ENCODE measurements at regions of chr9 and their contacts with region 1.

Region 1: GRCh38 chr9:34546834-34547827 is 24.3 kb upstream of the ENHO start:
- H3K4me3 ChIP-seq: no peak overlapping the region
- H3K27ac ChIP-seq: no peak overlapping the region
- H3K4me1 ChIP-seq: no peaks in the 10 kb centered on the region
- CTCF ChIP-seq: peak; percentile 38; the same call in 1 of the 2 replicates

Region 2: DNA sequence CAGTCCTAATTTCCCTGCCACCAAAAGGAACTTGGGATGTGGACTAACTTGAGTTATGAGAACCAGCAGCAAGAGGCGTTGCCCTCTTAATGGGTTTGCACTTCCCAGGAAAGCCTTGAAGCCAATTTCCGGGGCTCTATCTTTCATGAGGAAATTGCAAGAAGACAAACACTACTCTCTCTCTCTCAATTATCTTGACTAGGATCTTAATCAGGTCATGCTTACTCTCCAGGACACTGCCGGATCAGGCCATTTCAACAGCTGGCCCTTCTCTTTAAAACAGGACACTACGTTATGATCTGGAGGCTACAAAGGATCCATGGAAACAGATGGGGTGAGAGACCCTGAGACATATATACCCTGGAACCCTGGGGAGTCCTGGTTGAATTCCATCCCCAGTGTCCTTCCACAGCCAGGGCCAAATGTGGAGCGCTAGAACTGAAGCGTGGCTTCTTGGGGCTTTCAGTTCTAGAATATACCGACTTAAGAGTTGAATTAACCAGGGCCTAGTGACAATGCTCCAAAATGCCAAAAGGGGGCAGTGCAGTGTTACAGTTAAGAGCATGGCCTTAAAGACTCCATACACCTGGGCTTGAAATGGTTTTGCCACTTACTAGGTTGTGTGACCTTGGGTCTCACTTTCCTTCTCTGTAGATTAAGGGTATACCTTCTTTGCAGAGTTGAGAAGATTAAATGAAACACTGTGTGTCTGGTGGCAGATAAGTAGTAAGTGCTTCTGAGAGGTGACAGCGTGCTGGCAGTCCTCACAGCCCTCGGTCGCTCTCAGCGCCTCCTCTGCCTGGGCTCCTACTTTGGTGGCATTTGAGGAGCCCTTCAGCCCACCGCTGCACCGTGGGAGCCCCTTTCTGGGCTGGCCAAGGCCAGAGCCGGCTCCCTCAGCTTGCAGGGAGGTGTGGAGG is 109.9 kb before region 1 on chr9:
- CTCF ChIA-PET with region 1: interaction called, 18 read pairs
- POLR2A ChIA-PET with region 1: no interaction called
- H3K4me3 ChIP-seq: no peak overlapping the region
- H3K27ac ChIP-seq: no peak overlapping the region
- H3K4me1 ChIP-seq: no peaks in the 10 kb centered on the region
- CTCF ChIP-seq: 0 out of 2 replicates have a peak, but pooled peaks have one; percentile 14

Region 3: GRCh38 chr9:34522971-34523797 is 23.9 kb before region 1 on chr9 and contains the start of gene ENHO:
- CTCF ChIA-PET with region 1: interaction called, 13 read pairs
- POLR2A ChIA-PET with region 1: interaction called, 3 read pairs
- H3K4me3 ChIP-seq: peak within 1 kb of the TSS; percentile 37
- H3K27ac ChIP-seq: no peak within 1 kb of the TSS
- H3K4me1 ChIP-seq: no peaks in the 10 kb centered on the region
- CTCF ChIP-seq: no peak

Region 4: GRCh38 chr9:34536685-34537084 is 10.4 kb before region 1 on chr9:
- CTCF ChIA-PET with region 1: interaction called, 14 read pairs
- POLR2A ChIA-PET with region 1: no interaction called
- H3K4me3 ChIP-seq: no peak overlapping the region
- H3K27ac ChIP-seq: no peak overlapping the region
- H3K4me1 ChIP-seq: no peaks in the 10 kb centered on the region
- CTCF ChIP-seq: no peak

Region 5: DNA sequence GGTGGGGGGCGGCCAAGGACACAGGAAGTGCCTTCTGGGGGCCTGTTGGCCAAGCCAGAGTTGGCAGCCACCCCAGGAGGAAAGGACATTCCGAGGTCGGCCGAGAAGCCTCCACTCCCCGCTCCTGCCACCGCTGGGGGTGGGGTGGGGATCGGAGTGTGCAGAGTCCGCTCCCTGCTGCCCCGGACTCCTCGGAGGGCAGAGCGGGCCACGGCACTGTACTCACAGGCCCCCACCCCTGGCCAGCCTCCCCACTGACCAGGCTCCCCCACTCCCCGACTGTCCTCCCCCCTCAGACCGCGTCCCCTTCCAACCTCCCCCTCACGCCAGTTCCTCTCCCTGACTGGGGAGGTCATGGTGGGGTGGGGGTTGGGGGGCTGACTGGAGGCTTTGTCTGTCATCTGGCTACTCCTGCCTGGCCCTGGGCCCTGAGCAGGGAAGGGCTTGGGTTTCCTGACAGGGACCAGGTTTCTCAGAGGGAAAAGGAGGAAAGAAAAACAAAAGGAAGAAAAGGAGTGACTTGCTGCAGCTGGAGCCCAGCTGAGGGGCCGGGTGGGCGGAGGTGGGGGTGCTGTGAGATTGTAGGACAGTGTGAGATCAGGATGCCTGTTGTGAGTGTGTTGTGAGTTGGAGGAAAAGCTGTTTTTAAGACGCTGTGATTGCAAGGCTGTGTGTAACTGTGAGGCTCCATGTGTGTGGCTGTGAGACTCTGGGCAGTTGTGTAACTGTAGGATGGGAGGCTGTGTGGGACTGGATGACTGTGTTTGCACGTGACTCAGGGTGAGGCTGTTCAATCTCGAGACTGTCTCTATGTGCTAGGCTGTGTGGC is 12.7 kb after region 1 on chr9:
- CTCF ChIA-PET with region 1: interaction called, 22 read pairs
- POLR2A ChIA-PET with region 1: no interaction called
- H3K4me3 ChIP-seq: no peak overlapping the region
- H3K27ac ChIP-seq: no peak overlapping the region
- H3K4me1 ChIP-seq: peaks cover 1% of the 10 kb centered on the region; the same call in 1 of the 2 replicates
- CTCF ChIP-seq: no peak

Region 6: DNA sequence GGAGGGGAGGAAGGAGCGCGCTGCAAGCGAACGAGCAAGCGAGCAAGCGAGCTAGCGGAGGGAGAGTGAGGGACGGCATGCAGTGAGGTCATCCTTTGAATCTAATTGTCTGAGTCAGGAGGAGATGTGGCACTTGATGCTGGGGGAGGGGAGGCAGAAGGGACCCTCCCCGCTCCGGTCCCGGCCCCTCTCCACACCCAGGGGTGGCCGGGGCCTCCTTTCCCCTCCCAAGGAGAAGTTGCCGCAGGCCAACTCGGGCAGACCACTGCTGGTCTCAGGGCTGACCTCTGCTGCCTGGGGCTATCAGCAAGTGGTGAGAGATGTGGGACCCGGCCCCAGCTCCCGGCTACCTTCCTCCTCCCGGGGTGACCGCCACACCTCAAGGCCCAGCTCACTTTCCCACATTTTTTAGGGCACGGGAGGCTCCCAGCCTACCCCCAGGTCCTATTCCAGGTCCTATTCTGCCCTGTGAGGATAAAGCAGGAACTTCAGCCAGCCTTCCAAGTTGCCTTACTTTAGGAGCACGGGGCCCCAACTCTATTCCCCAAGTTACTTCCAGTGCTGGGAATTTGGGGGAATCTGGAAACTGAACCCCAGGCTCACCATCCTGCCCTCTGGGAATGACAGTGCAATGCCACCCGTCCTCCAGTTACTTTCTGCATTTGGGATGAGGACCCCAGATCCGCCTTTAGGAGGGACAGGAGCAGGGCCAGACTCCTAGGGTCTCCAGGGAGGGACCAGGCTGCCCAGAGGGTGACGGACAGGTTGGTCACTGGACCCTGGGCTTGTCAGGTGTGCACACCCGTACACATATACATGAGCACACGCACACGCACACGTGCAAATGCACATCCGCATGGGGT is 31.3 kb after region 1 on chr9:
- CTCF ChIA-PET with region 1: interaction called, 18 read pairs
- POLR2A ChIA-PET with region 1: no interaction called
- H3K4me3 ChIP-seq: no peak overlapping the region
- H3K27ac ChIP-seq: no peak overlapping the region
- H3K4me1 ChIP-seq: no peaks in the 10 kb centered on the region
- CTCF ChIP-seq: no peak

Region 7: GRCh38 chr9:34637356-34638137 is 90.4 kb after region 1 on chr9 and contains the start of gene SIGMAR1:
- CTCF ChIA-PET with region 1: interaction called, 20 read pairs
- POLR2A ChIA-PET with region 1: no interaction called
- H3K4me3 ChIP-seq: peak within 1 kb of the TSS; percentile 67
- H3K27ac ChIP-seq: peak within 1 kb of the TSS; percentile 77
- H3K4me1 ChIP-seq: no peaks in the 10 kb centered on the region
- CTCF ChIP-seq: peak; percentile 20; the same call in 1 of the 2 replicates

Region 8: DNA sequence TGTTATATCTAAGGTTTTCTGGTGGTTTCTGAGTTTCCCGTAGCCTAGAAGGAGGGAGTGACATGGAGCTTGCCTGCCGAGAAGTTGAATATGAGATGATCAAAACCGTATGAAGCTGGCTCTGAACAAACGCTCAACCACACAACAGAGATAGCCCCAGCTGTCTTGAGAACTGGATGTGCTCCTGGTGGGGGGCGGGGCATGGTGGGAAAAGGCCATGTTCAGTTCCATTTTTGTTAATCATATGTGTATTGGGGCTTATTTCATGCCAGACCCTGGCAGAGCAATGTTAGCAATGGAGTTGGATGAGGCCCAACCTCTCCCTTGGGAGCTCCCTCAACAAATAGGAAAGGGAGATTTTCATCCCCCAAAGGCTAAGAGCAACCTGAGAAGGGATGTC is 139.1 kb after region 1 on chr9:
- CTCF ChIA-PET with region 1: no interaction called
- POLR2A ChIA-PET with region 1: no interaction called
- H3K4me3 ChIP-seq: no peak overlapping the region
- H3K27ac ChIP-seq: no peak overlapping the region
- H3K4me1 ChIP-seq: no peaks in the 10 kb centered on the region
- CTCF ChIP-seq: no peak